ENCODE measurements at regions of chr2 and their contacts with region 1.

Region 1: DNA sequence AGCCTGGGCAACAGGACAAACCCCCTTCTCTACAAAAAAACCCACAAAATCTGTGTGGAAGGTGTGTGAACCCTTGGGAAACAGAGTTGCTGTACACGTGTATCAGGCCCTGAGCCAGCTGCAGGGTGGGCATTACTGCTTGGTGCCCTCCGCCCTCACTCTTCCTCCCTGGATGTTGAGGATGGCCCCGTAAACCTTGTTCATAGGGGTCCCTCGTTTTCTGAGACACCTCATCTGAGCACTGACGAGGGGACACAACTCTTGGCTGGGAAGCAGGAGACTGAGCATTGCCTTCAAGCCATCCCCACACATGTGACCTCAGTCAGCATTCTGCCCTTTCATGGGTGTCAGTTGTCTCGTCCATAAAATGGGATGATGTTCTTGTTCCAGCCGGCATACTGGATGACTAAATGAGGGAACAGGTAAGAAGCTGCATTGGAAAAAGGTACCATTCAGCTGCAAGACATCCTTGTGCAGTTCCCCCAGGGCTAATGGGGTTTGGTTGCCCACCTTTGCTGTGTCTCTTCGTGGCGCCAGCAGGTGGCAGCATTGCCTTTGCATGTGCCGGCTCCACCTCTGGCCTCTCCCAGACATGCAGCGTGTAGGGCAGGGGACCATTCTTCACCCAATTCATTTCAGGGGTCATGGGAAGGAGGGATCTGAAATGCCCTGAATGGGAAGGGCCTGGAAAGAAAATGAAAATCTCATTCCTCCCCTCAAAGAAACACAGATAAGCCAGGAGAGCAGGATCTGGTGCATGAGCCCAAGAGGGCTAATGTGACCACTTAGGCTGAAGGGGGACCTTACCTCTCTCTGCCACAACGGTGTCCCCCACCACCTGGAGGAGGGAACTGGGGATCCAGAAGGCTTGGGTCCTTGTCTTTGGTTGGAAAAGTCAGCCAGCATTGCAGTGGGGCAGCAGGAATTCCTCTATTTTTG is 36.4 kb upstream of the HAAO start:
- DNase-seq: peak; percentile 61 to 79 (median 70)
- H3K4me3 ChIP-seq: peak overlapping the region in 7 of 59 donors; percentile 19 to 64 (median 49)
- H3K27ac ChIP-seq: peak overlapping the region in 1 of 59 donors; percentile 18
- H3K27me3 ChIP-seq: no peaks in the 10 kb centered on the region
- CTCF ChIP-seq: peak; percentile 69 to 98 (median 93)

Region 2: GRCh38 chr2:42706836-42707235 is 121.9 kb before region 1 on chr2:
- intact Hi-C with region 1: no loop called
- DNase-seq: no peak
- H3K4me3 ChIP-seq: no peak overlapping the region
- H3K27ac ChIP-seq: no peak overlapping the region
- H3K27me3 ChIP-seq: no peaks in the 10 kb centered on the region
- CTCF ChIP-seq: no peak

Region 3: GRCh38 chr2:42944779-42945415 is 116.1 kb after region 1 on chr2:
- intact Hi-C with region 1: loop called (anchors 5 to 10 kb)
- DNase-seq: no peak
- H3K4me3 ChIP-seq: no peak overlapping the region
- H3K27ac ChIP-seq: no peak overlapping the region
- H3K27me3 ChIP-seq: no peaks in the 10 kb centered on the region
- CTCF ChIP-seq: no peak

Region 4: GRCh38 chr2:42957109-42957860 is 128.5 kb after region 1 on chr2:
- intact Hi-C with region 1: no loop called
- DNase-seq: no peak
- H3K4me3 ChIP-seq: no peak overlapping the region
- H3K27ac ChIP-seq: no peak overlapping the region
- H3K27me3 ChIP-seq: no peaks in the 10 kb centered on the region
- CTCF ChIP-seq: no peak

Region 5: GRCh38 chr2:43024515-43025011 is 195.8 kb after region 1 on chr2:
- intact Hi-C with region 1: loop called in 1 of 2 experiments (anchors 10 kb)
- DNase-seq: peak in 8 of 10 donors; percentile 47 to 78 (median 69)
- H3K4me3 ChIP-seq: no peak overlapping the region
- H3K27ac ChIP-seq: peak overlapping the region in 51 of 59 donors; percentile 0 to 93 (median 70)
- H3K27me3 ChIP-seq: no peaks in the 10 kb centered on the region
- CTCF ChIP-seq: peak; percentile 56 to 96 (median 83)

Region 6: DNA sequence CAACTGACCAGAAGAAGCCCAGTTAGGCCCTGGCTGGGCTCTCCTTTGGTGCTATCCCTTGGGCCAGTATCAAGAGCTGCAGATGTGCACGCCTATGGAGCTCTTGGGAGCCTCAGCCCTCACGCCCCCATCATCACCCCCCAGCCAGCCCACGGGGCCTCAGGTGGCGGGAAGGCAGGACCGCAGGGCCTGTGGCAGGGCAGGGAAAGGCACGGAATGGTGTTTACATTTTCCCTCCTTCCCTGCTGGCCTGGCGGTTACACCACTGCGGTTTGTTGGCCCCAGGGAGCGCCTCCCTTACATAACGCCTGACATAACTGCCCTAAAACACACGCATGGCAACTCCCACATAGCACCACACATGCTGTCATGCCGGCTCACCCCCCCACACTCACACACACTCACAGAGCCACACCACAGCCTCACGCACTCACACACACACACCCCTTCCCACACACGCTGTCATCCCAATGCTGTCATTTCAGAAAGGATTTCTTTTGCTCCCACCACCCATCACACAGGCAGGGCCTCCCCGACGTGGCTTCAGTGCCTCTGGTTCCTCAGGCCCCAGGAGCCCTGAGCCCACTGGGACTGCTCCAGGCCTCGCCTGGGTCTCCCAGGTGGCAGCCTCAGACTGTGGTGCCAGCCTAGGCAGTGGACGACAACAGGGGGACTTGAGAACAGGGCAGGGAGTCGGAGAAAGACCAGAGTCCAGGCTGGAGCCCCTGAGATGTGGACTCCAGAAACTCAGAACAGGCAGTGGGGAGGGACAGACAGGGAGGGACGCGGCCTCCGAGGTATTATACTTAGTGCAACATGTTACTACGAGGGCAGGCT is 381.9 kb after region 1 on chr2:
- intact Hi-C with region 1: loop called in 1 of 2 experiments (anchors 5 kb)
- DNase-seq: peak in 2 of 10 donors; percentile 20 to 59
- H3K4me3 ChIP-seq: no peak overlapping the region
- H3K27ac ChIP-seq: peak overlapping the region in 1 of 59 donors; percentile 18
- H3K27me3 ChIP-seq: no peaks in the 10 kb centered on the region
- CTCF ChIP-seq: no peak

Region 7: DNA sequence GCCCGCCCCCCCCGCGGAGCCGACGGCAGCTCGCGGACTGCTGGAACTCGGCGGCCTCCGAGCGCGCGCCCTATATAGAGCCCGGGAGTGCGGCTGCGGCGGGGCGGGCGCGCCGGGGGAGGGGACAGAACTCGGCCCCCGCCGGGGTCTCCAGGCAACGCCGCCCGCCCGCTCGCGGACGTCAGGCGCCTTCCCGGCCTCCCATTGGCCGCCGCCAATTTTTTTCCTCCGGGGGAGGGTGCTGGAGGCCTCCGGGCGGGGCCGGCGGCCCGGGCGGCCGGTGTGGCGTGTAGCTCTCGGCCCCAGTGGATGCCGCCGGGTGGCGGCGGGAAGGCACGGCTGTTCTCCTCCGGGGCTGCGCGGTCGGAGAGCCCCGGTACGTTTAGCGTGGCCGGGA is 397.8 kb after region 1 on chr2 and contains the start of gene ZFP36L2:
- intact Hi-C with region 1: loop called (anchors 1 to 5 kb)
- DNase-seq: peak; percentile 71 to 98 (median 94)
- H3K4me3 ChIP-seq: peak within 1 kb of the TSS; percentile 51 to 93 (median 79)
- H3K27ac ChIP-seq: peak within 1 kb of the TSS; percentile 89 to 100 (median 98)
- H3K27me3 ChIP-seq: peaks cover 0 to 19% (median 0%) of the 10 kb centered on the region in 45 donors
- CTCF ChIP-seq: peak in 8 of 56 donors; percentile 4 to 26 (median 18)
- total RNA-seq, gene ZFP36L2: 13.0 to 86.0 (median 32.4) TPM

Region 8: GRCh38 chr2:43576981-43577892 is 748.5 kb after region 1 on chr2:
- intact Hi-C with region 1: loop called in 1 of 2 experiments (anchors 10 kb)
- DNase-seq: no peak
- H3K4me3 ChIP-seq: peak overlapping the region in 8 of 59 donors; percentile 2 to 49 (median 18)
- H3K27ac ChIP-seq: peak overlapping the region in 33 of 59 donors; percentile 21 to 79 (median 48)
- H3K27me3 ChIP-seq: no peaks in the 10 kb centered on the region
- CTCF ChIP-seq: peak; percentile 56 to 90 (median 79)